ENCODE measurements at regions of chr1 and their contacts with region 1.

Region 1: DNA sequence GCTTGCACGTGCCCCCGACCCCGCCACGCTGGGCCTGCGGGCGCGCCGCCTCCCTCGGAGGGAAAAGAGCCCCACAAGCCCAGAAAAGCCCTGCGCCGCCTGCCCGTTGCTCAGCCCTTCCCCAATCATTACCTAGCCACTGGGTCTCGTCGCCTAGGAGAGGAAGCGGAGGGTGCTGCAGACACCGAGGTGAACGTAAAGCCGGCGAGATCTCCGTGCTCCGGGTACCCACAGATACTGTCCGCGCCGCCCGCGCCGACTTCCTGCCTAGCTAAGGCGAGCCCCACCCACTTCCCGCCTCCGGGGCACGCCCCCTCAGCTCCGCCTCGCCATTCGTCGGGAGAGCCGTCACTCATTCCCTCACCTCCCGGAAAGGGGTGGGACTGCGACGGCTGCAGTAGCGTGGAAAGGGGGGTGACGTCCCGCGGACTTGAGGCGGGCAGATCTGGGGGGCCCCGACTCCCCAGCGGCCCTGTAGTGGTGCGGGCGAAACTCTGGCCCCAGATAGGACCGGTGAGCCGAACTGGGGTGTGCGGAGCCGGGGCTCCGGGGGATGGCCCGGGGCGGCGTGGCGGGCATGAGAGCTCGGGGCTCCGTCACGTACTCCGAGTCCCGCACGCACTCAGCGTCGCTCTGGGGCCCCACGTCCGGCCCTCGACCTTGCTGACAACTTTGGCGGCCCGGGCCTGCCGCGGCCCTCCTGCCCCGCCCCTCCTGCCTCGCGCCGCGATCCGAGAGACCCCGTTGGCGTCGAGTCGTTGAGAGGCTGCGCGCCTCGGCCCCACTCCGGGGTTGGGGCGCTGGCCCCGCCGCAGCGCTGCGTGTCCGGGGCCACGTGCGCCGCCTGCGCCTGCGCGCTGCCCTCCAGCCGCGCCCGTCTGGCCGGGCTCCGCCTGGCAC is at the start of gene ENO1:
- DNase-seq: peak; percentile 96 to 100 (median 99)
- ATAC-seq: peak; percentile 78 to 86
- H3K4me3 Mint-ChIP-seq: peak within 1 kb of the TSS; percentile 89 to 97 (median 94)
- H3K27ac Mint-ChIP-seq: peak within 1 kb of the TSS; percentile 87 to 98 (median 96)
- H3K4me1 Mint-ChIP-seq: peaks cover 12 to 50% (median 46%) of the 10 kb centered on the region in 4 donors
- H3K27me3 Mint-ChIP-seq: no peaks in the 10 kb centered on the region
- polyA plus RNA-seq, gene ENO1: 873 to 1,190 (median 1,047) TPM

Region 2: GRCh38 chr1:8844501-8845006 is 34.1 kb before region 1 on chr1:
- POLR2A ChIA-PET with region 1: no interaction called
- DNase-seq: no peak
- ATAC-seq: no peak
- H3K4me3 Mint-ChIP-seq: no peak overlapping the region
- H3K27ac Mint-ChIP-seq: peak overlapping the region in 1 of 10 donors; percentile 77
- H3K4me1 Mint-ChIP-seq: peaks cover 3 to 7% (median 6%) of the 10 kb centered on the region in 4 donors
- H3K27me3 Mint-ChIP-seq: peaks cover 0 to 4% (median 0%) of the 10 kb centered on the region in 5 donors

Region 3: GRCh38 chr1:8910914-8911313 is 32.2 kb after region 1 on chr1:
- POLR2A ChIA-PET with region 1: interaction called, 25 read pairs
- DNase-seq: no peak
- ATAC-seq: peak in 1 of 2 donors; percentile 27
- H3K4me3 Mint-ChIP-seq: peak overlapping the region in 1 of 10 donors; percentile 48
- H3K27ac Mint-ChIP-seq: peak overlapping the region in 5 of 10 donors; percentile 20 to 91 (median 74)
- H3K4me1 Mint-ChIP-seq: peaks cover 23 to 46% (median 36%) of the 10 kb centered on the region in 4 donors
- H3K27me3 Mint-ChIP-seq: no peaks in the 10 kb centered on the region

Region 4: GRCh38 chr1:8962812-8963530 is 84.3 kb after region 1 on chr1:
- POLR2A ChIA-PET with region 1: interaction called, 12 read pairs
- DNase-seq: peak in 6 of 10 donors; percentile 30 to 52 (median 45)
- ATAC-seq: peak; percentile 29 to 49
- H3K4me3 Mint-ChIP-seq: peak overlapping the region; percentile 85 to 100 (median 91)
- H3K27ac Mint-ChIP-seq: peak overlapping the region; percentile 91 to 99 (median 94)
- H3K4me1 Mint-ChIP-seq: peaks cover 42 to 87% (median 77%) of the 10 kb centered on the region in 4 donors
- H3K27me3 Mint-ChIP-seq: no peaks in the 10 kb centered on the region

Region 5: DNA sequence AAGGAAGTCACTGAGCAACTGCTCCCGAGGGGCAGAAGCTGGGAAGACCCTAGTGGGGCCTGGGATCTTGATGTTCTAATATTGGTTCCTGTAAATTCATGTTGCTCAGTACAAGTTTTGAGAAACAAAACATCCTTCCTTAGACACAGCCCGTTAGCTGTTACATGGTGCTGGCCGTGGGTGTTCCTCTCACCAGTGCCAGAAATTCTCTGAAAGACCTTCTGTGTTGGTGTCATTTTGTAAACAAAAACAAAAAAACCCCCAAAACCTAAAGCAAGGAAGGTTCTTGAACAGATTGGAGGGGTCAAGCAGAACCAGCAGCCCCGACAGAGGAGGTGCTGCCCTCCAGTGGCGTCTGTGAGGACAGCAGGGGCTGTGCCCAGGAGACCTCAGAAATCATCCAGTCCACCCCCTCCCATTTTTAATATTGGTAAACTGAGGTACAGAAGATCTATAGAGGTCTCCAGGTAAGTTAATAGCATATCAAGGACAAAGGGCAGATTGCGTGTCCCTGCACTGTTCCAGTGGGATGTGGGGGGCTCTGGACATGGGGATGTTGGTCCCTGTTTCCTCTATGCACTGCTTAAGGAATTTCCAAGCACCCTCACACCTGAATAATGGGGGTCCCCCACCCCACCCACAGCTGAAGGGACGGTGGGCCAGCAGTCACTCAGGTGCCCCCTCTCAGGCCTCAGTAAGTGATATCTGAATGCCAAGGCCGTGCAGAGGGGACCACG is 109.4 kb after region 1 on chr1:
- POLR2A ChIA-PET with region 1: interaction called, 27 read pairs
- DNase-seq: peak; percentile 50 to 83 (median 73)
- ATAC-seq: peak; percentile 58 to 63
- H3K4me3 Mint-ChIP-seq: peak overlapping the region; percentile 46 to 85 (median 70)
- H3K27ac Mint-ChIP-seq: peak overlapping the region; percentile 92 to 97 (median 95)
- H3K4me1 Mint-ChIP-seq: peaks cover 18 to 44% (median 40%) of the 10 kb centered on the region in 4 donors
- H3K27me3 Mint-ChIP-seq: no peaks in the 10 kb centered on the region

Region 6: DNA sequence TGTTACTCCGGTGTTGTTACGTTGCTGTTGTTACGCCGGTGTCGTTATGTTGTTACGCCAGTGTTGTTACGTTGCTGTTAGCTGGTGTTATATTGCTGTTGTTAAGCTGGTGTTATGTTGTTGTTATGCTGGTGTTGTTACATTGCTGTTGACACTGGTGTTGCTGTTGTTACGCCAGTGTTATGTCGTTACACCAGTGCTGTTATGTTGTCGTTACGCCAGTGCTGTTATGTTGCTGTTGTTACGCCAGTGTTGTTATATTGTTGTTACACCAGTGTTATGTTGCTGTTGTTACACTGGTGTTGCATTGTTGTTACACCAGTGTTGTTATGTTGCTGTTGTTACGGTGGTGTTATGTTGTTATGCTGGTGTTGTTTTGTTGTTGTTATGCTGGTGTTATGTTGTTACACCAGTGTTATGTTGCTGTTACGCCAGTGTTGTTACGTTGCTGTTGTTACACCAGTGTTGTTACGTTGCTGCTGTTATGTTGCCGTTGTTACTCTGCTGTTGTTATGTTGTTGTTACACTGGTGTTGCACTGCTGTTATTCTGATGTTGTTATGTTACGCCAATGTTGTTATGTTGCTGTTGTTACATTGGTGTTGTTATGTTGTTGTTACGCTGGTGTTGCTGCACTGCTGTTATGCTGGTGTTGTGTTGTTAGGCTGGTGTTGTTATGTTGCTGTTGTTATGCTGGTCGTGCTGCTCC is 381.5 kb after region 1 on chr1:
- POLR2A ChIA-PET with region 1: no interaction called
- DNase-seq: no peak
- ATAC-seq: no peak
- H3K4me3 Mint-ChIP-seq: no peak overlapping the region
- H3K27ac Mint-ChIP-seq: peak overlapping the region in 2 of 10 donors; percentile 15 to 23
- H3K4me1 Mint-ChIP-seq: peaks cover 8 to 40% (median 36%) of the 10 kb centered on the region in 4 donors
- H3K27me3 Mint-ChIP-seq: no peaks in the 10 kb centered on the region

Measured in naive thymus-derived CD8-positive, alpha-beta T cell (primary cell).